A549 (cell line): ENCODE measurements at regions of chr1 and their contacts with region 1.

Region 1: DNA sequence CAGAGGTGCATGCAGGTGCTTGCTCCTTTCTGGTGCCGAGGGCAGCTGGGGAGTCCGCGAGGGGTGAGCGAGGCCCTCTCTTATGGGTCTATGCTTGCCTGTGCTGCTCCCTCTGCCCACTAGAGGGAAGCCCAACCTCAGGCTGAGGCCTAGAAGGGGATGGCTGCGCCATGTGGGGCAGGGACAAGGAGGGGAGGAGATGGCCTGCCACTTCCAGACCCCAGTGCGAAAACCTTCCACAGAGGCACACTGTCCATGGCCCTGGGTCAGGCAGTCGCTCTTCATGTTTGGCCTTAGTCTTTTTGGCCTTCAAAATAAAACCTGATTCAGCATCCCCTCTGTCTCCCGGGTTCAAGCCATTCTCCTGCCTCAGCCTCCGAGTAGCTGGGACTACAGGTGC is 14.0 kb downstream of the RHBG start:
- DNase-seq: peak; percentile 75 to 88
- ATAC-seq: peak; percentile 90 to 95
- H3K4me3 ChIP-seq: no peak overlapping the region
- H3K27ac ChIP-seq: 0 out of 6 replicates have a peak overlapping the region, but pooled peaks of 1 of the 2 experiments have one; percentile 47
- H3K4me1 ChIP-seq: peaks cover 8% of the 10 kb centered on the region
- CTCF ChIP-seq: peak; percentile 76
- EP300 ChIP-seq: no peak
- POLR2A ChIP-seq: no peak
- RAD21 ChIP-seq: peak; percentile 85 to 92

Region 2: DNA sequence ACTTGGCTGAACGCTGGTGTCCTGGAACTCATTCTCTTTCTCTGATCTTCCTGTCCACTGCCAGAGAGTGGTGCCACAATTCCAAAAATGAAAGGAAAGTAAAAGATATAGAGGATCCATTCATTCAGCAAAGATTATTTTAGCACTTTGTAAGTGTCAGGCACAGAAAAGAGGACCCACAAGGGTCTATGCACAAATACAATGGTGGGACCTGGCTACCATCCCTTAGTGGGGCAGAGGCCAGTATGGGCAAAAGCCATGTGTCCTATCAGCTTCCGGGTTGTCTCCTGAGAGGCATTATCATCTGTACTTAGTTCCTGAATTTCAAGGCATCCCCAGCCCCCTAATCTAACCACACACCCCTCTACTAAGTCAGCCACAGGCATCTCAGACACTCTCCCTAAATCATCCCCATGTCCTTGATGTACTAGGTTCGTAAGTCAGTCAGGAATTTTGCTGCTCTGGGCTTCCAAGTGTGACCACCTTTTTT is 381.3 kb before region 1 on chr1:
- CTCF ChIA-PET with region 1: no interaction called
- POLR2A ChIA-PET with region 1: no interaction called
- DNase-seq: no peak
- ATAC-seq: peak; percentile 14 to 36; a peak in 3 of 6 replicates
- H3K4me3 ChIP-seq: 0 out of 3 replicates have a peak overlapping the region, but pooled peaks have one; percentile 17
- H3K27ac ChIP-seq: peak overlapping the region; percentile 68 to 85
- H3K4me1 ChIP-seq: peaks cover 39% of the 10 kb centered on the region
- CTCF ChIP-seq: no peak
- EP300 ChIP-seq: no peak
- POLR2A ChIP-seq: no peak
- RAD21 ChIP-seq: peak; percentile 25 to 35; a peak in 2 of 5 replicates

Region 3: GRCh38 chr1:156346636-156347035 is 36.4 kb before region 1 on chr1:
- CTCF ChIA-PET with region 1: interaction called, 399 read pairs
- POLR2A ChIA-PET with region 1: no interaction called
- DNase-seq: no peak
- ATAC-seq: no peak
- H3K4me3 ChIP-seq: no peak overlapping the region
- H3K27ac ChIP-seq: no peak overlapping the region
- H3K4me1 ChIP-seq: no peaks in the 10 kb centered on the region
- CTCF ChIP-seq: no peak
- EP300 ChIP-seq: no peak
- POLR2A ChIP-seq: no peak
- RAD21 ChIP-seq: no peak

Region 4: DNA sequence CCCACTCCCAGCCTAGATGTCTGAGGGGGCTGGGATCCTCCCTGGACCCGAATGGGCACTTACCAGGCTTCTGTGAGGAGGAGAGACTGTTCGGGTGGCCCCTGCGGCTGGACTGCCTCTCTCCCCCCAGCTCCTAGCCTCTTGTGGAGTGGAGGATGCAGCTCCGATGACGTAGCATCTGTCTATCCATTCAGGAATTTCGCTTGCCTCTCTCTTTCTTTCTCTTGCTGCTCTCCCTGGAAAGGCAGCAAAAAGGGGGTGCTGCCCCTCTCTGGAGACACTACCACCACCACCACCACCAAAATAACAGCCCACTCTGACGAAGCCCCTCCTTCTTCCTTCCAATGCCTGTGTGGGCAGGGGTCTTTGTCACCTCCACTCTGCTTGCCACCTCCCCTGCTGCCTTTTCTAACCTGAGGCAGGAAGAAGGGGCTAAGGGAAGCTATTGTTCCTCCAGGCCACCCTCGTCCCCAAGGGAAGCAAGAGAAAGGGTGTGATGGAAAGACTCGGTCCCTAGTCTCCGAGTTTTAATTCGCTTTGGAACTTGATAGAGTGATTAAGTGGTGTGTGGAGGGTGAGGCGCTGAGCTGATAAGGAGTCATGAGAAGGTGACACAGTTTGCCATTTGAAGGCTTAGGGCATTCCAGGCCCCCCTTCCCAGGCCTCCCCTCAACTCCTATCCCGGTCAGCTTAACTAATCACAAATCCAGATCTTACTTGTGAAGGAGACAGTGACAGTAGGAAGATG is 46.5 kb after region 1 on chr1:
- CTCF ChIA-PET with region 1: interaction called, 146 read pairs
- POLR2A ChIA-PET with region 1: no interaction called
- DNase-seq: no peak
- ATAC-seq: no peak
- H3K4me3 ChIP-seq: no peak overlapping the region
- H3K27ac ChIP-seq: no peak overlapping the region
- H3K4me1 ChIP-seq: no peaks in the 10 kb centered on the region
- CTCF ChIP-seq: no peak
- EP300 ChIP-seq: no peak
- POLR2A ChIP-seq: no peak
- RAD21 ChIP-seq: no peak

Region 5: DNA sequence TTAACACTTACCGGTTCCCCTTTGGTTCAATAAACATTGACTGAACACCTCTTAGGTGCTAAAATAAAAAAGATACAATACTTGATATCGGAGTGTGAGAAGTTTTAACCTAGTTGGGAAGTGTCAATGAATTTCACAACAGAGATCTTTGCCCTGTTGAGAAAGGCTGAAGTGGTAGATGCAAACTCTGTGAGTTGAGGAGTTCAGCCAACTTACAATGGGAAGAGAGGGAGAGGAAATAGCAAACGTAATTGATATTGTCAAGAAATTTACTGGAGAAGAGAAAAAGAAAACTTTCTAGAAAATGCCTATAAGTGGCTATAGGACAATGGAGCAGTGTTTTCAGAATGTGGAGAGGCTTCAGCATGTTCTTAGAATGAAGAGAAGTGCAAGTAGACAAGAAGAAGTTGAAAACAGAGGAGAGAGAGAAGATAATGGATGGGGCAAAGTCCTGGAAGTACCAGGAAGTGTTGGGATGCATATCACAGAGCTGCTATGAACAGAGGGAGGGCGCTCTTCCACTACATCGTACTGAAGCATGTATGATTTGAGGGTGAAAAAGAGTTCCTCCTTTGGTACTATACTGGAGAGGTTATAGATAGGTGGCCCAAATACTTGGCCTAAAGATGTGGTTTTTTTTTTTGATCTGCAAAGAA is 68.6 kb after region 1 on chr1:
- CTCF ChIA-PET with region 1: interaction called, 543 read pairs
- POLR2A ChIA-PET with region 1: no interaction called
- DNase-seq: peak in 1 of 2 experiments; percentile 33
- ATAC-seq: no peak
- H3K4me3 ChIP-seq: no peak overlapping the region
- H3K27ac ChIP-seq: no peak overlapping the region
- H3K4me1 ChIP-seq: peaks cover 4% of the 10 kb centered on the region; the same call in 1 of the 3 replicates
- CTCF ChIP-seq: no peak
- EP300 ChIP-seq: no peak
- POLR2A ChIP-seq: no peak
- RAD21 ChIP-seq: no peak

Region 6: DNA sequence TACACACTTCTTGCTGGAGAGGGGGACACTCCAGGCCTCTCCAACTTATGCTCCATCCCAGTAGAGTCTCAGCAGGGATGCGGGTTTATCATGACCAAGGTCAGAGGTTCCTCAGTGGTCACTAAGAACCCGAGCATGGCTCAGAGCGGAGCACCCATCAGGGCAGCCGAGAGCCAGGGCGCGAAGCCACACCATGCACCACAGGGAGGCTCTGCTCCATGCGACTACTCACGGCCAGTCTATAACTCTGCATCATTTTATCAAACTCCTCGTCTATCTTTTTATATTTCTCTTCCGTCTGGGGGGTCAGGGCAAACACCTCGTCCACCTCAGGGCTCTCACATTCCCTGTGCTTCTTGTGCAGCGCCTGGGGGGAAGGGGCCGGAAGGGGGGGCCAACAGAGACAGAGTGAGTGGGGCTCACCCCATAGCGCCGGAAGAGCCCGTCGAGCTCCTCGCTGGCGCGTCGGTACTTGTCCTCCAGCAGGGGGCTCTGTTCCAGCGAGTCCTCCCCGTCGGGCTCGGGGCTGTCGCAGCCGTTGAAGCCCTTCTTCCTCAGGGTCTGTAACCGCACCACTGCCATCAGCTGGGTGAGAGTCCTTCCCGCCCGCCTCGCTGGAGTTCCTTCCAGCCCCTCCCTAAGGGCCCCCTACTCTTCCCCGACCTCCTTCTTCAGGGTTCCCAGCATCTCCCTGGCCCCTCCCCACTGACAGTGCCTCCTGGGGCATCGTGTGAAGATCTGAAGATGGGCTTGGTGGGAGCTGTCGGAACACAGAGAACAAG is 97.6 kb after region 1 on chr1:
- CTCF ChIA-PET with region 1: interaction called, 11 read pairs
- POLR2A ChIA-PET with region 1: no interaction called
- DNase-seq: peak; percentile 59 to 83
- ATAC-seq: peak; percentile 36 to 78; a peak in 3 of 6 replicates
- H3K4me3 ChIP-seq: no peak overlapping the region
- H3K27ac ChIP-seq: peak overlapping the region in 1 of 2 experiments; percentile 42; a peak in 2 of 6 replicates
- H3K4me1 ChIP-seq: peaks cover 29% of the 10 kb centered on the region
- CTCF ChIP-seq: peak; percentile 64
- EP300 ChIP-seq: no peak
- POLR2A ChIP-seq: no peak
- RAD21 ChIP-seq: peak; percentile 53 to 57

Region 7: GRCh38 chr1:156625436-156626078 is 242.5 kb after region 1 on chr1:
- CTCF ChIA-PET with region 1: interaction called, 15 read pairs
- POLR2A ChIA-PET with region 1: no interaction called
- DNase-seq: peak in 1 of 2 experiments; percentile 61
- ATAC-seq: peak; percentile 27 to 64
- H3K4me3 ChIP-seq: peak overlapping the region; percentile 49
- H3K27ac ChIP-seq: peak overlapping the region; percentile 3 to 76; a peak in 3 of 6 replicates
- H3K4me1 ChIP-seq: peaks cover 12% of the 10 kb centered on the region
- CTCF ChIP-seq: peak; percentile 80
- EP300 ChIP-seq: no peak
- POLR2A ChIP-seq: no peak
- RAD21 ChIP-seq: peak; percentile 65 to 72

Region 8: GRCh38 chr1:157004806-157005205 is 621.8 kb after region 1 on chr1:
- CTCF ChIA-PET with region 1: no interaction called
- POLR2A ChIA-PET with region 1: no interaction called
- DNase-seq: no peak
- ATAC-seq: no peak
- H3K4me3 ChIP-seq: no peak overlapping the region
- H3K27ac ChIP-seq: no peak overlapping the region
- H3K4me1 ChIP-seq: peaks cover 7% of the 10 kb centered on the region; the same call in 2 of the 3 replicates
- CTCF ChIP-seq: no peak
- EP300 ChIP-seq: no peak
- POLR2A ChIP-seq: no peak
- RAD21 ChIP-seq: no peak